ENCODE measurements at regions of chr7 and their contacts with region 1.

Region 1: DNA sequence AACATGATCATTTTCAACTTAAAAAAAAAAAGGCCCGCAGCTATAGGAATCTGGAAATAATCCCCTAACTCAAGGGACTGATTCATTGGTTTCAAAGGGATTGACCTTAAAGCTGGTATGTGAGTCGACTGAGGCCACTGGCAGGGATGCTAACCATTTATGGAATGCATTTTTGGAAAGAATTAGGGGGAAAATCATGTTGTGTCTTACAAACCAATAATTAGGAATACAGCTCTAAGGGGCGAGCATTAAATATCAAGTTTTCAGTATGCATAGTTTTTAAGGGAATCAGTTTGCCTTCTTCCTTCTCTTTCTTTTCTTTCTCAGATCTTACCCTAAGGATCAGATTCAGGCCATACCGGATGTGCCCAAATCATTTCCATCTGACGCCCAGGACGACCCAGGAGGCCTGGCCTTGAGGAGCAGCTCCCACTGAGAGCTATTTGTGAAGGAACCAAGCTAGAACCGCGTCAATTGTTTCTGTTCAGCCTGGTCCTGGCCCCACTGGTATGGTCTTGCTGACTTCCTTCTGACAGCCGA is 48.7 kb downstream of the BPGM start:
- DNase-seq: no peak
- H3K4me3 ChIP-seq: no peak overlapping the region
- CTCF ChIP-seq: no peak
- POLR2A ChIP-seq: no peak

Region 2: GRCh38 chr7:134954197-134955082 is 259.0 kb after region 1 on chr7:
- intact Hi-C with region 1: loop called (anchors 5 kb)
- DNase-seq: no peak
- H3K4me3 ChIP-seq: no peak overlapping the region
- CTCF ChIP-seq: no peak
- POLR2A ChIP-seq: no peak

Measured in lower leg skin (tissue), 4 donors.